CD4-positive, alpha-beta T cell (primary cell): ENCODE measurements at regions of chr2 and their contacts with region 1.

Region 1: GRCh38 chr2:218292048-218293014 is at the start of gene TMBIM1:
- DNase-seq: peak; percentile 62 to 92 (median 76)
- ATAC-seq: peak; percentile 76
- H3K4me3 ChIP-seq: peak within 1 kb of the TSS; percentile 99
- H3K4me3 Mint-ChIP-seq: peak within 1 kb of the TSS; percentile 95
- H3K27ac ChIP-seq: peak within 1 kb of the TSS; percentile 89 to 96
- H3K27ac Mint-ChIP-seq: peak within 1 kb of the TSS; percentile 99
- H3K4me1 ChIP-seq: peaks cover 73% of the 10 kb centered on the region
- H3K4me1 Mint-ChIP-seq: peaks cover 62% of the 10 kb centered on the region
- H3K27me3 ChIP-seq: no peaks in the 10 kb centered on the region
- H3K27me3 Mint-ChIP-seq: no peaks in the 10 kb centered on the region
- CTCF ChIP-seq: peak; percentile 59
- total RNA-seq, gene TMBIM1: 99.2 to 102 TPM

Region 2: DNA sequence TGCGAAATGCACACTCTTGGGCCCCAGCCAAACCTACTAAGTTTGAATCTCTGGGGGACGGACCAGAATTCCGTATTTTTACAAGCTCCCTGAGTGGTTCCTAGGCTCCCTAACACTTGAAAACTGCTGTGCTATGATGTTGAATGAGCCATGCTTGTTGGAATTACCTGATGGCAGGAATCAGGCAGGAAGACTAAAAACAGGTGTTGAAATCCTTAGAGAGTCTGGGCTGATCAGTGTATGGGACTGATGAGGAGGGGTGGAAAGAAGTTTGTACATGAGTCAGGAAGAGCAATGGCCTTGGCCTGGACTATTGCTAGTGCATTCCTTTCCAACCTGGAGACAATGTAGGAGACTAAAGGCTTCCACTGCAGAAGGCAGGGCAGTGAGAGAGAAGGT is 24.9 kb after region 1 on chr2:
- CTCF ChIA-PET with region 1: interaction called, 4 read pairs
- POLR2A ChIA-PET with region 1: interaction called, 6 read pairs
- intact Hi-C with region 1: loop called in 1 of 2 experiments (anchors 2 kb)
- DNase-seq: no peak
- ATAC-seq: no peak
- H3K4me3 ChIP-seq: no peak overlapping the region
- H3K4me3 Mint-ChIP-seq: peak overlapping the region; percentile 40
- H3K27ac ChIP-seq: peak overlapping the region; percentile 60 to 67
- H3K27ac Mint-ChIP-seq: peak overlapping the region; percentile 97
- H3K4me1 ChIP-seq: peaks cover 47% of the 10 kb centered on the region
- H3K4me1 Mint-ChIP-seq: peaks cover 56% of the 10 kb centered on the region
- H3K27me3 ChIP-seq: no peaks in the 10 kb centered on the region
- H3K27me3 Mint-ChIP-seq: no peaks in the 10 kb centered on the region
- CTCF ChIP-seq: no peak

Region 3: GRCh38 chr2:218360447-218360846 is 68.1 kb after region 1 on chr2:
- CTCF ChIA-PET with region 1: interaction called, 10 read pairs
- POLR2A ChIA-PET with region 1: interaction called, 8 read pairs
- intact Hi-C with region 1: loop called in 1 of 2 experiments (anchors 2 kb)
- DNase-seq: peak in 2 of 14 experiments; percentile 45 to 63
- ATAC-seq: no peak
- H3K4me3 ChIP-seq: no peak overlapping the region
- H3K4me3 Mint-ChIP-seq: no peak overlapping the region
- H3K27ac ChIP-seq: no peak overlapping the region
- H3K27ac Mint-ChIP-seq: no peak overlapping the region
- H3K4me1 ChIP-seq: peaks cover 8% of the 10 kb centered on the region
- H3K4me1 Mint-ChIP-seq: peaks cover 2% of the 10 kb centered on the region
- H3K27me3 ChIP-seq: no peaks in the 10 kb centered on the region
- H3K27me3 Mint-ChIP-seq: no peaks in the 10 kb centered on the region
- CTCF ChIP-seq: no peak